ENCODE measurements at regions of chr14 and their contacts with region 1.

Region 1: GRCh38 chr14:94036313-94037050 is 10.3 kb downstream of the OTUB2 start:
- DNase-seq: peak; percentile 51 to 62
- H3K4me3 ChIP-seq: no peak overlapping the region
- H3K27ac ChIP-seq: no peak overlapping the region
- H3K4me1 ChIP-seq: no peaks in the 10 kb centered on the region
- H3K27me3 ChIP-seq: no peaks in the 10 kb centered on the region
- CTCF ChIP-seq: peak; percentile 59 to 80 (median 69)
- POLR2A ChIP-seq: no peak

Region 2: GRCh38 chr14:93880021-93880820 is 156.3 kb before region 1 on chr14:
- intact Hi-C with region 1: no loop called
- DNase-seq: peak; percentile 24 to 42
- H3K4me3 ChIP-seq: peak overlapping the region in 1 of 2 donors; percentile 5
- H3K27ac ChIP-seq: no peak overlapping the region
- H3K4me1 ChIP-seq: no peaks in the 10 kb centered on the region
- H3K27me3 ChIP-seq: no peaks in the 10 kb centered on the region
- CTCF ChIP-seq: no peak
- POLR2A ChIP-seq: no peak

Region 3: GRCh38 chr14:94005324-94006073 is 31.0 kb before region 1 on chr14:
- intact Hi-C with region 1: no loop called
- DNase-seq: no peak
- H3K4me3 ChIP-seq: no peak overlapping the region
- H3K27ac ChIP-seq: no peak overlapping the region
- H3K4me1 ChIP-seq: no peaks in the 10 kb centered on the region
- H3K27me3 ChIP-seq: no peaks in the 10 kb centered on the region
- CTCF ChIP-seq: peak in 1 of 4 experiments; percentile 13
- POLR2A ChIP-seq: no peak

Region 4: DNA sequence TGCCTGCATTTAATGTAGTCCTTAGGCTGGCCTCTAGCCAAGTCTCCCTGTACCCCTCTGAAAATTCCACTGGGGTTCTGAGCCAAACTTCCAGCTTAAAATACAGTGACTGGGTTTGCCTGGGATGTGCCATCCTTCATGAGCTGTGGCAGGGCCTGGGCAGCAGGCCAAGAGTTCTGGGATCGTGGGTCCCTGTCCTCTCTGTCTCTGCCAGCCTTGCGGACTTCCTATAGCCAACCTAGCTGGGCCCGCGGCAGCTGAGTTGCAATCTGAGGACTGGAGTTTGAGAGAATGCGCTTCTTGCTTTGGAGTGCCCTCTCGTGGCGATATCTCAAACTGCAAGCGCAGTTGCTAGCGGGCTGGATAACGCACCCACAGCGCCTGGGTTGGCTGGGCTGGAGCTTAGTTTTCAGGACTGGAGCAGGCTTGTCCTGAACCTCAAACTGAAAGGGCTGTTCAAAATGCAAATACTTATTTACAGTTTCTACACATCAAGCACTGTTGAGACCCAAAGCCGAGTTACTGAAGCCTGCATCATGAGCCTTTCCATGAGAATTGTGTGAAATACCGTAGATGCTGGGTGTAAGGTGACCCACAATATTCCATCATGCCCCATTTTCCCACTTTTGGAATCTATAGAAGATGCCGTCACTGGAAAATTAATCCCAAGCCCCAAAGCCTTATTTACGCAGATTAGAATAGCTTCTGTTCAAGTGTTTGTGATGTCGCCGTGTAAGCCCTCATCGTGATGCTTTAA is 100.3 kb after region 1 on chr14:
- intact Hi-C with region 1: loop called (anchors 2 kb)
- DNase-seq: peak; percentile 85 to 86
- H3K4me3 ChIP-seq: no peak overlapping the region
- H3K27ac ChIP-seq: no peak overlapping the region
- H3K4me1 ChIP-seq: no peaks in the 10 kb centered on the region
- H3K27me3 ChIP-seq: no peaks in the 10 kb centered on the region
- CTCF ChIP-seq: peak; percentile 91 to 98 (median 93)
- POLR2A ChIP-seq: no peak

Measured in uterus (tissue), 4 donors.